ENCODE measurements at regions of chr1 and their contacts with region 1.

Region 1: DNA sequence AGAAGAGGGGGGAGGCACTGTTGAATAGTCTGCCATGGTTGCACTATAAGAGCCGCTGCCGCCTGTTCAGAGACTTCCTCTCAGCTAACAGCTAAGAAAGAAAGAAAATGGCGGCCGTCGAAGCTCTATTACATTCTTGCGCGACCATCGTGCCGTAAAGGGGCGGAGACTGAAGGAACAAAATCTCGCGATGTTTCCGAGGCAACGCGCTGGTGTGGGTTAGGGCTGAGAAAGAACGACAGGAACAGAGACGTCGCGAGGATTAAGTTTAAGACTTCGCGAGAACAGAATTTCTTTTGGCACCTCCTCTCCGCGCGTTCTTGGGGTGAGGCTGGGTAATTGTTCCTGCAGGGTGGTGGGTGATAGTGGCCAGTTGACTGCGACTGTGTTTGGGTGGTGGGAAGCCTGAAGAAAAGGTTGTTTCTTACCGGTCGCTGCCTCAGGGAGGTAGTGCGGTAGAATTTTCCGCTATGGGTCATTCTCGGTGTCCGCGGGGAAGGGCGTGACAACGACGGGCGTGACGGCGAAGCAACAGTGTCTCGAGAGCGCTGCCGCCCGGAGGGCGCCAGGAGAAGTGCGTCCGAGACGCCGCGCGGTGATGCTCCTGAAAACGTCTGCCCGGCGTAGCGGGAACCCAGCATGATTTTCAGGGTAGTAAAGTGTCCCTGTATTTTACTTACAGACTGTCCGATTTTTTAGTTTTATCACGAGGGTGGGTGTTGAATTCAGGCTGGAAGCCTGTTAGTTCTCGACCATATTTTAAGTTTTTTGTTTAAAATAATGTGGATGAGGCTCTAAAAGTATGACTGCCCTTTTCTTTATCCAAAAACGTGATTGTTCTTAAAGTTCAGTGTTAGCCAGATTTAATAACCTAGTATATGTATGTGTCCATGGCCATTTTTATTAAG is at the start of gene FUBP1:
- DNase-seq: peak; percentile 98
- ATAC-seq: peak; percentile 91
- H3K4me3 ChIP-seq: peak within 1 kb of the TSS; percentile 79 to 100 (median 90)
- H3K27ac ChIP-seq: peak within 1 kb of the TSS; percentile 99
- H3K4me1 ChIP-seq: peaks cover 61% of the 10 kb centered on the region
- H3K27me3 ChIP-seq: no peaks in the 10 kb centered on the region; a peak in 1 of 5 replicates
- CTCF ChIP-seq: peak; percentile 80
- EP300 ChIP-seq: no peak; a peak in 2 of 4 replicates
- POLR2A ChIP-seq: peak; percentile 89 to 99
- RAD21 ChIP-seq: peak; percentile 29; the same call in 1 of the 2 replicates
- total RNA-seq, gene FUBP1: 166 and 192 TPM in 2 replicates

Region 2: GRCh38 chr1:77779529-77780281 is 199.5 kb before region 1 on chr1 and contains the start of gene MIGA1:
- CTCF ChIA-PET with region 1: no interaction called
- POLR2A ChIA-PET with region 1: interaction called, 10 read pairs
- in situ Hi-C with region 1: no loop called
- intact Hi-C with region 1: no loop called
- DNase-seq: peak; percentile 83
- ATAC-seq: peak; percentile 98
- H3K4me3 ChIP-seq: peak within 1 kb of the TSS; percentile 88 to 97 (median 89)
- H3K27ac ChIP-seq: peak within 1 kb of the TSS; percentile 24
- H3K4me1 ChIP-seq: peaks cover 23% of the 10 kb centered on the region
- H3K27me3 ChIP-seq: no peaks in the 10 kb centered on the region; a peak in 1 of 5 replicates
- CTCF ChIP-seq: no peak
- EP300 ChIP-seq: peak in 1 of 2 experiments; percentile 36; a peak in 1 of 4 replicates
- POLR2A ChIP-seq: peak; percentile 35 to 66; a peak in 3 of 4 replicates
- RAD21 ChIP-seq: no peak
- total RNA-seq, gene MIGA1: 6.6 and 6.7 TPM in 2 replicates

Region 3: DNA sequence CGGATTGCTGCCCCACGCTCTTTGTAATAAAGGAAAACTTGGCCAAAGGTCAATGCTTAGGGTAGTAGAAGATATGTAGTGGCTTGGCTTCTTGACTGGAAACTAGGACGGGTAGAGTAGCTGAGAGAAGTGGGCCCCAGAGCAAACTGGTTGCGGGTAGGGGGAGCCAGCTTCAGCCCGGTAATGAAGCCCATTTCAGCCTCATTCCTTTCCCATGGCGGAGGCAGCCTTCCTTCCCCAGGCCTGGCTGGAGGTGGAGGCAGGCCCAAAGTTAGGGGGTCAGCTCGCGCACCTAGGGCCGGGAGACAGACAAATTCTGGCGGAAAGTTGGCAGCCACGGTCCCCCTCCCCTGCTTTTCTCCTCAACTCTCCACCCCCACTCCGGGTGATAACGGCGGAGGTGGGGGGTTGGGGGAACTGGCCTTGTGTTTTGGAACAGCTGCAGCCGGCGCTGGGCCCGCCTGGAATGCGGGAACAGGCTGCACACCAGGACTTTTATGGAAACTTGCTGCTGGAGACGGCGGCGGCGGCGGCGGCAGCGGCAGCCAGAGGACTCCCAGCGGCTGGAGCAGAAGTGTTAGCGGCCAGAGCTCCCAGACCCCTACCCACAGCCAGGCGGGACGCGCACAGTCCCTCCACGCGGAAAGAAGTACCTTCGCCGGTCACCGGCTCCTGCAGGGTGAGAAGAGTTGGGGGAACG is 91.0 kb before region 1 on chr1 and contains the start of gene NEXN:
- CTCF ChIA-PET with region 1: no interaction called
- POLR2A ChIA-PET with region 1: interaction called, 12 read pairs
- in situ Hi-C with region 1: no loop called
- intact Hi-C with region 1: no loop called
- DNase-seq: peak; percentile 44
- ATAC-seq: peak; percentile 89
- H3K4me3 ChIP-seq: peak within 1 kb of the TSS; percentile 71 to 96 (median 85)
- H3K27ac ChIP-seq: peak within 1 kb of the TSS; percentile 51
- H3K4me1 ChIP-seq: peaks cover 13% of the 10 kb centered on the region
- H3K27me3 ChIP-seq: no peaks in the 10 kb centered on the region; a peak in 1 of 5 replicates
- CTCF ChIP-seq: peak; percentile 47
- EP300 ChIP-seq: no peak
- POLR2A ChIP-seq: peak in 1 of 2 experiments; percentile 38; a peak in 1 of 4 replicates
- RAD21 ChIP-seq: no peak
- total RNA-seq, gene NEXN: 0.97 and 1.1 TPM in 2 replicates

Region 4: GRCh38 chr1:77994117-77994705 is 15.0 kb after region 1 on chr1:
- CTCF ChIA-PET with region 1: no interaction called
- POLR2A ChIA-PET with region 1: interaction called, 161 read pairs
- in situ Hi-C with region 1: no loop called
- intact Hi-C with region 1: no loop called
- DNase-seq: no peak
- ATAC-seq: no peak
- H3K4me3 ChIP-seq: no peak overlapping the region
- H3K27ac ChIP-seq: no peak overlapping the region
- H3K4me1 ChIP-seq: peaks cover 47% of the 10 kb centered on the region
- H3K27me3 ChIP-seq: no peaks in the 10 kb centered on the region
- CTCF ChIP-seq: no peak
- EP300 ChIP-seq: no peak
- POLR2A ChIP-seq: no peak
- RAD21 ChIP-seq: no peak

Region 5: DNA sequence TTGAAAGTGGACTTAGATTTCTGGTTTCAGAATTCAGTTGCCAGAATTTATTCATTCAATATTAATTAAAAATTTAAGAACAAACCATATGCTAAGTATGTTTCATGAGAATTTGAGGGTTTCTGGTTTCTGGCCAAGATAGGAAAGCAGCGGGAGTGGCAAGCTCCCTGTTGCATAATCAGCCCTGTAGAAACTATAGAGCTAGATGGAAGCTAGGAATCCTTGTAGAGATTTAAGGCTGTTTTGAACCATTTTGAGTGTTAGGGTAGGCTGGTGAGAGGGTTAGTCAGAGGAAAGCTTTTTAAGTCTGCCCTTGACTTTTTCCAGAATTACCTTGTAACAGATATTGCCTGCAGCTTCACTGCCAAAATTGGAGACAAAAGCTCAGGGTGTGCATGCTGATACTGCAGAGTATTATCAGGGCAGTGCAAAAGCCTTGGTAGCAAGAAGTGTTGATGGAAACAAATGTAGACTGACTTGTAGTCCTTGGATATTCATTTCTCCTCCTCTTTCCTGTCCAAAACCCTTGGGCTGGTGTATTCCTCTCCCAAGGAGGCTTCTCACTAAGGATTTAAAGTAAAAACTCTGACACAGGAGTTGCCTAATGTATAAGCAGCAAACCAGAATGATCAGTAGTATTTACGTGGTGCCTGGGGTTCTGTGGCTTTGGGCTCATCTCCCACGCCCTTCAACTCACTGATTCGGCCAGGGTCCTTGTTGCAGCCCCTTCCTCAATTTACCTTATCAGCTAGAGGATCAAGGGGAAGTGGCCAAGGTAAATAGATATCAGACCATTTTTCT is 54.0 kb after region 1 on chr1:
- CTCF ChIA-PET with region 1: no interaction called
- POLR2A ChIA-PET with region 1: no interaction called
- in situ Hi-C with region 1: no loop called
- intact Hi-C with region 1: no loop called
- DNase-seq: no peak
- ATAC-seq: peak; percentile 52; the same call in 2 of the 3 replicates
- H3K4me3 ChIP-seq: no peak overlapping the region
- H3K27ac ChIP-seq: no peak overlapping the region
- H3K4me1 ChIP-seq: 0 out of 2 replicates have a peak, but pooled peaks cover 3% of the 10 kb centered on the region
- H3K27me3 ChIP-seq: no peaks in the 10 kb centered on the region; a peak in 1 of 5 replicates
- CTCF ChIP-seq: no peak
- EP300 ChIP-seq: no peak
- POLR2A ChIP-seq: no peak
- RAD21 ChIP-seq: no peak

Region 6: GRCh38 chr1:78045926-78046778 is 66.9 kb after region 1 on chr1 and contains the start of gene GIPC2:
- CTCF ChIA-PET with region 1: no interaction called
- POLR2A ChIA-PET with region 1: interaction called, 12 read pairs
- in situ Hi-C with region 1: no loop called
- intact Hi-C with region 1: loop called (anchors 1 kb)
- DNase-seq: peak; percentile 31
- ATAC-seq: peak; percentile 86
- H3K4me3 ChIP-seq: peak within 1 kb of the TSS; percentile 79 to 96 (median 90)
- H3K27ac ChIP-seq: peak within 1 kb of the TSS; percentile 86
- H3K4me1 ChIP-seq: peaks cover 53% of the 10 kb centered on the region
- H3K27me3 ChIP-seq: no peaks in the 10 kb centered on the region; a peak in 1 of 5 replicates
- CTCF ChIP-seq: no peak; the same call in 1 of the 2 replicates
- EP300 ChIP-seq: peak in 1 of 2 experiments; percentile 28; a peak in 2 of 4 replicates
- POLR2A ChIP-seq: peak; percentile 65 to 78
- RAD21 ChIP-seq: no peak; the same call in 1 of the 2 replicates
- total RNA-seq, gene GIPC2: 21.6 and 39.7 TPM in 2 replicates

Region 7: DNA sequence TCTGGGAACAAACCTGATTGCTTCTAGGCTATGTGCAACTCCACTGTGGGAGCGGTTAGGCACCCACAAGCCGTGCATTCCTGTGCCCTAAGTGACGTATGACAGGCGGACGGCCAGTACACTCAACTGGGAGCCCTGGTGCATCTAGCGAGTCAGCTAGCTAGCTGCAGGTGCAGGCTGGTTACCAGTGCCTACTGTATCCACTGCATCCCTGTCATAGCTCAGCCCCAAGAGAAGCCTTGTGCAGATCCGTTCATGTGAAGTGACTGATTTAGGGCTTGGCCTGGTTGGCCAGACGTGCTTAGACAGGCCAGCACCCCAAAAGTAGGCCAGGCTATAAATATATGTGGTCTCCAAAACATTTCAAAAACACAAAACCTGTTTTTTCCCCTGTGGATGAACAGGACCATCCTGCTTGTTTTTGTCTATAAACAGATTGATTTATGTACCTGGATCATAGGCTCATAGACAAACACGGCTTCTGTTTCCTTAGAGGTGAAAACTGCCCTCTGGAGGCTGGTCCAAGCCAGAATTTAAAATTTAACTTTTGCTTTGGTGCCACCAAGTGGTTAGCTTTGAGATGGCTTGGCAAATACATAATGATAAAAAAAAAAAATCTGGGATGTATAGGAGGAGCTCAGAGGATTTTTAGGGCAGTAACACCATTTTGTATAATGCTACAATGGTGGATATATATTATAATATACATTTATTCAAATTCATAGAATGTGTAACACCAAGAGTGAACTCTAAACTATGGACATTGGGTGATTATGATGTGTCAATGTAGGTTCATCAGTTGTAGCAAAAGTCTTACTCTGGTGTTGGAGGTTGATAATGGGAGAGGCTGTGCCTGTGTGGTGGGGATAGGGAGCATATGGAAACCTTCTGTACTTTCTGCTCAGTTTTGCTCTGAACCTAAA is 135.1 kb after region 1 on chr1:
- CTCF ChIA-PET with region 1: interaction called, 7 read pairs
- POLR2A ChIA-PET with region 1: interaction called, 3 read pairs
- in situ Hi-C with region 1: loop called (anchors 10 kb)
- intact Hi-C with region 1: loop called (anchors 1 kb)
- DNase-seq: peak; percentile 75
- ATAC-seq: peak; percentile 87
- H3K4me3 ChIP-seq: no peak overlapping the region
- H3K27ac ChIP-seq: no peak overlapping the region
- H3K4me1 ChIP-seq: peaks cover 25% of the 10 kb centered on the region
- H3K27me3 ChIP-seq: no peaks in the 10 kb centered on the region
- CTCF ChIP-seq: peak; percentile 80
- EP300 ChIP-seq: no peak
- POLR2A ChIP-seq: no peak
- RAD21 ChIP-seq: peak; percentile 75; the same call in 1 of the 2 replicates